ENCODE measurements at regions of chr7 and their contacts with region 1.

Region 1: DNA sequence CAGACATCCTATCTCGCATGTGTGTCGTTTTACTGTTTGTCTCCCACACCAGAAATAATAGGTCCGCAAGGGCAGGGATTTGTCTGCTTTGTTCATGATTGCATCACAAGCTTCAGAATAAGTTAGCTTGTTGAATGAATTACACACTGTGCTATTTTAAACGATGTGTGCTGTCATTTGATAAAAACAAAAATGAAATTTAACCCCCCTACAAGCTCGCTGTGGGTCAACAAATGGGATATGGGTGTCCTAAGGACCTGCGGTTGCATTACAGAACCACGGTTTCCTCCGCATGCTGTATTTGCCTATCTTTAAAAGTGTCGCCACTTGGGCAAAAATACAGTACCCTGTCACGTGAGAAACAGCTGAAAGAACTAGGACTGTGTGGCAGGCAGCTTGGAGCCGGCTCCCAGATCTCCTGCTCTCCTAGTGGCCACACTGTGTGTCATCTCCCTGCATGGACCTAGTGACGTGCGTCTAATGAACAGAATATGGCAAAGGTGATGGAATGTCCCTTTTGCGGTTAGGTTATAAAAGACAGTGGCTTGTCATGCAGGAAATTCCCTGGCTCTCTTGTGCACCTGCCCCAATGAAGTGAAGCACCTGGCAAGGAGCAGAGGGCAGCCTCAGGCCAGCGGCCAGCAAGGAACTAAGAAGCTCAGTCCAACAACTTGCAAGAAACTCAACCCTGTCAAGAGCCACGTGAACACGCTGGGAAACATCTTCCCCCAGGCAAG is 32.9 kb upstream of the CRYGN start:
- DNase-seq: no peak
- ATAC-seq: peak; percentile 16 to 67 (median 64)
- H3K4me3 ChIP-seq: no peak overlapping the region
- H3K27ac ChIP-seq: peak overlapping the region in 4 of 10 donors; percentile 8 to 57 (median 35)
- H3K4me1 ChIP-seq: peaks cover 8 to 36% (median 30%) of the 10 kb centered on the region in 9 donors
- H3K27me3 ChIP-seq: no peaks in the 10 kb centered on the region
- CTCF ChIP-seq: peak in 1 of 9 donors; percentile 9

Region 2: DNA sequence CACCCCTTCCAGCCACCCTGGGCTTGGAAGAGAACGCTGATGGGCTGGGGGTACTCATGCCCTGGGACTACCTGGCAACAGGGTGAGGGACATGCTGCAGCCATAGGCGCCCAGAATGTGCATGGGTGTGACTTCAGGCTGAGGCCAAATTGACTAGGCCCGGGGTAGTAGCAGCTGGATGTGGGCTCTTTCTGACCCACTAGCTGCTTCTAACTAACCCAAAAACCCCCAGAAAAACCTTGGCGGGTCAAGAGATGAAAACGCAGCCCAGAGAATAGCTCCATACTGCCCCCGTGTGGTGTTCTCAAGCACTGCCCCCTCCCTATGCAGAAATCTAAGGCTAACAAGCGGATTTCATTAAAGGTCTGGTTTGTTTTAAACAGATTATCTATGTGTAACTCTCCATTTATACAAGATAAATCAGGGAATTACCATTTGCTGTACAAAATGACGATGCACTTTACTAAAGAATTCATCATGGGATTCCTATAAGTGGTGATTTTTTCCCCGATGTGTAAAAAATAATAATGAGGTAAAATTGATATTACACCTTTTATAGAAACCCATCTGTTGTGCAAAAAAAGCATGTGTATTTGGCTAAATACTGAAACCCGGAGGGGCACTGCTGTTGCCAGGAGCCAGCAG is 228.5 kb before region 1 on chr7:
- intact Hi-C with region 1: no loop called
- DNase-seq: no peak
- ATAC-seq: no peak
- H3K4me3 ChIP-seq: peak overlapping the region in 1 of 10 donors; percentile 38
- H3K27ac ChIP-seq: peak overlapping the region in 1 of 10 donors; percentile 35
- H3K4me1 ChIP-seq: peaks cover 16 to 79% (median 61%) of the 10 kb centered on the region in 9 donors
- H3K27me3 ChIP-seq: peaks cover 0 to 47% (median 6%) of the 10 kb centered on the region in 7 donors
- CTCF ChIP-seq: peak; percentile 68 to 90 (median 86)

Region 3: GRCh38 chr7:151432791-151433521 is 39.9 kb before region 1 on chr7:
- intact Hi-C with region 1: no loop called
- DNase-seq: no peak
- ATAC-seq: no peak
- H3K4me3 ChIP-seq: no peak overlapping the region
- H3K27ac ChIP-seq: no peak overlapping the region
- H3K4me1 ChIP-seq: peaks cover 0 to 26% (median 8%) of the 10 kb centered on the region in 9 donors
- H3K27me3 ChIP-seq: peaks cover 0 to 10% (median 7%) of the 10 kb centered on the region in 7 donors
- CTCF ChIP-seq: no peak

Region 4: DNA sequence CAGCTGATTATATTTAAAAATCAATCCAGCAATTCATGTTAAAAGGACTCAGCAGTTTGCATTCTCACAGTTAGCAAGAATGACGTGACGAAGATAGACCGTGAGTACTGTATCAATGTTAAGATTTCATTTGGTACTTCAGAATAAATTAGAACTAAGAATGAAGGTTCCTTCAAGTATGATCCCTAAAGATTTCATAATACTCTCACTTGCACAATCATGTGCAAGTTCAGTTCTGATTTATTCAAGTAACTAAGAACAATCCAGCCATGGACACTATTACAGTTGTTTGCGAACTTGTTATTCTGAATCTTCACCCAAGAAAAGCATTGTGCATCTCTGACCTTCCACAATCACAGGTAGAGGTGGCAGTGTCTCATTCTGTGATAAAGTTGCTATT is 39.1 kb after region 1 on chr7:
- intact Hi-C with region 1: loop called in 3 of 10 experiments (anchors 5 to 10 kb)
- DNase-seq: no peak
- ATAC-seq: peak in 1 of 8 donors; percentile 17
- H3K4me3 ChIP-seq: no peak overlapping the region
- H3K27ac ChIP-seq: peak overlapping the region in 3 of 10 donors; percentile 3 to 49 (median 6)
- H3K4me1 ChIP-seq: peaks cover 8 to 99% (median 84%) of the 10 kb centered on the region in 9 donors
- H3K27me3 ChIP-seq: no peaks in the 10 kb centered on the region
- CTCF ChIP-seq: no peak

Region 5: GRCh38 chr7:151705636-151706276 is 232.9 kb after region 1 on chr7:
- intact Hi-C with region 1: no loop called
- DNase-seq: peak in 1 of 2 donors; percentile 53
- ATAC-seq: peak; percentile 21 to 72 (median 56)
- H3K4me3 ChIP-seq: peak overlapping the region in 5 of 10 donors; percentile 4 to 26 (median 18)
- H3K27ac ChIP-seq: peak overlapping the region in 3 of 10 donors; percentile 17 to 38 (median 35)
- H3K4me1 ChIP-seq: peaks cover 5 to 47% (median 31%) of the 10 kb centered on the region in 9 donors
- H3K27me3 ChIP-seq: no peaks in the 10 kb centered on the region
- CTCF ChIP-seq: peak; percentile 21 to 67 (median 54)

Measured in heart right ventricle (tissue), 16 donors.